HAP-1 (cell line): ENCODE measurements at regions of chr10 and their contacts with region 1.

Region 1: GRCh38 chr10:52313933-52314816 is at the start of gene DKK1:
- DNase-seq: peak; percentile 52 to 81
- H3K4me3 ChIP-seq: peak within 1 kb of the TSS; percentile 43
- H3K4me1 ChIP-seq: peaks cover 5% of the 10 kb centered on the region; the same call in 1 of the 2 replicates
- H3K27me3 ChIP-seq: peaks cover 17% of the 10 kb centered on the region

Region 2: GRCh38 chr10:52488606-52489485 is 174.7 kb after region 1 on chr10:
- in situ Hi-C with region 1: loop called (anchors 5 kb)
- DNase-seq: peak in 1 of 2 experiments; percentile 39
- H3K4me3 ChIP-seq: no peak overlapping the region
- H3K4me1 ChIP-seq: no peaks in the 10 kb centered on the region
- H3K27me3 ChIP-seq: no peaks in the 10 kb centered on the region

Region 3: GRCh38 chr10:52566471-52567246 is 252.5 kb after region 1 on chr10:
- in situ Hi-C with region 1: loop called (anchors 10 kb)
- DNase-seq: peak; percentile 22 to 45
- H3K4me3 ChIP-seq: no peak overlapping the region
- H3K4me1 ChIP-seq: no peaks in the 10 kb centered on the region
- H3K27me3 ChIP-seq: 0 out of 2 replicates have a peak, but pooled peaks cover 2% of the 10 kb centered on the region